ENCODE measurements at regions of chr6 and their contacts with region 1.

Region 1: GRCh38 chr6:165884813-165885765 is 222.0 kb upstream of the PDE10A start:
- DNase-seq: no peak
- H3K4me3 ChIP-seq: no peak overlapping the region
- H3K27ac ChIP-seq: no peak overlapping the region
- H3K4me1 ChIP-seq: no peaks in the 10 kb centered on the region
- H3K27me3 ChIP-seq: no peaks in the 10 kb centered on the region
- CTCF ChIP-seq: peak; percentile 34 to 68 (median 43)

Region 2: GRCh38 chr6:165042912-165043311 is 842.2 kb before region 1 on chr6:
- intact Hi-C with region 1: no loop called
- DNase-seq: no peak
- H3K4me3 ChIP-seq: no peak overlapping the region
- H3K27ac ChIP-seq: no peak overlapping the region
- H3K4me1 ChIP-seq: no peaks in the 10 kb centered on the region
- H3K27me3 ChIP-seq: no peaks in the 10 kb centered on the region
- CTCF ChIP-seq: no peak

Region 3: DNA sequence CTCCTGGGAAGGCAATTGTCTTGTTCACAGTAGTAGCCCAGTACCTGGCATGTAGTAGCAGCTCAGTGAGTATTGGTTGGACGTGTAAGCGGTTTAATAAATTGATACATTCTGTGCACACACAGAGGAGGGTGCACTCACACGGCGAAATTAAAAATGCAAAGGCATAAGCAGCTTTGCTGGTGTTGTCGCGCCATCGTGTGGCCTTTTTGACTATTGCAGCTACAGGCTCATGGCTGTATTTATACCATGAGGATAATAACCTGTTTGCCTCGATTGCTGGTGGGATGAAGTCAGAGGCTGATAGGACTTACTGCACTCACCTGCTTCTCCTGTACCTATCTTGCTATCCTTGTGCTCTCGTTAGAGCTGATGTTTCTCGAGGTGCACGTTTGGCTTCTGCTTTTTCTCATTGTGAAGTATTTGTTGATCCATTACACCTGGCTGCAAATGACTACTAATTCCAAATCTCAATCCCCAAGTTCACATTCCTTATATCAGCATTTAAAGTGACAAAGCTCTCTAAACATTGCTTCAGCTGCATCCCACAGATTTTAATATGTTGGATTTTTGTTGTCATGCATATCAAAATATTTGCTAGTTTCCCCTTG is 221.1 kb after region 1 on chr6:
- intact Hi-C with region 1: loop called (anchors 1 kb)
- DNase-seq: peak in 1 of 2 donors; percentile 69
- H3K4me3 ChIP-seq: no peak overlapping the region
- H3K27ac ChIP-seq: no peak overlapping the region
- H3K4me1 ChIP-seq: no peaks in the 10 kb centered on the region
- H3K27me3 ChIP-seq: no peaks in the 10 kb centered on the region
- CTCF ChIP-seq: peak; percentile 27 to 62 (median 54)